Esophagus squamous epithelium (tissue), 5 donors: ENCODE measurements at regions of chr18 and their contacts with region 1.

Region 1: DNA sequence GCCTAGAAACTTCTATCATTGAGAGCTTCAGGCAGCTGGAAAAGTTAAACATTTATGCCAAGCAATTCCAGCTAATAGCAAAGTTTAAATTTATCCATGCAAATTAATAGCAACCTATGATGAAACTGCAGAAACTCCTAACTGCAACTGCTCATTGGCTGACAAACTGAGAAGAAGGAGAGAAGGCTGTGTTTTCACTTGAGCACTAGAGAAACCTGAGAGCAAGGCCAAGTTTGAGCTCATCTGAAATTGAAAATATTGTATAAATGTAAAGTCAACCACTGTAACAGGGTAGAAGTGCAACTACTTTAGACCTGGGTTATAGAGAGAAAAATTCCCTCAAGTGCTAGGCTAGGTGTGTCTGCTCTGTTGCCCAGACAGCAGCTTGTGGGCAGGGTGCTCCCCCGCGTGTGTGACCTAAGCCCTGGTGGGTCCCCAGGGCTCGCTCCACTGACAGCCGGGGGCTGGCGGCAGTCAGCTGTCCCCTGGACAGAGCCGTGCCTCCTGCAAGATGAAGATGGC is 50.2 kb downstream of the CABYR start:
- DNase-seq: no peak
- H3K4me3 ChIP-seq: no peak overlapping the region
- H3K27ac ChIP-seq: no peak overlapping the region
- H3K4me1 ChIP-seq: no peaks in the 10 kb centered on the region
- H3K27me3 ChIP-seq: no peaks in the 10 kb centered on the region
- CTCF ChIP-seq: no peak
- POLR2A ChIP-seq: no peak

Region 2: GRCh38 chr18:24293254-24293653 is 104.2 kb after region 1 on chr18:
- intact Hi-C with region 1: loop called (anchors 10 kb)
- DNase-seq: no peak
- H3K4me3 ChIP-seq: no peak overlapping the region
- H3K27ac ChIP-seq: no peak overlapping the region
- H3K4me1 ChIP-seq: no peaks in the 10 kb centered on the region
- H3K27me3 ChIP-seq: no peaks in the 10 kb centered on the region
- CTCF ChIP-seq: no peak
- POLR2A ChIP-seq: no peak

Region 3: GRCh38 chr18:24362758-24363157 is 173.7 kb after region 1 on chr18:
- intact Hi-C with region 1: no loop called
- DNase-seq: no peak
- H3K4me3 ChIP-seq: no peak overlapping the region
- H3K27ac ChIP-seq: no peak overlapping the region
- H3K4me1 ChIP-seq: peaks cover 0 to 18% (median 4%) of the 10 kb centered on the region in 3 donors
- H3K27me3 ChIP-seq: no peaks in the 10 kb centered on the region
- CTCF ChIP-seq: no peak
- POLR2A ChIP-seq: no peak